Activated CD4-positive, alpha-beta T cell treated with anti-CD3 and anti-CD28 coated beads for 36 hours (primary cell): ENCODE measurements at regions of chr1 and their contacts with region 1.

Region 1: DNA sequence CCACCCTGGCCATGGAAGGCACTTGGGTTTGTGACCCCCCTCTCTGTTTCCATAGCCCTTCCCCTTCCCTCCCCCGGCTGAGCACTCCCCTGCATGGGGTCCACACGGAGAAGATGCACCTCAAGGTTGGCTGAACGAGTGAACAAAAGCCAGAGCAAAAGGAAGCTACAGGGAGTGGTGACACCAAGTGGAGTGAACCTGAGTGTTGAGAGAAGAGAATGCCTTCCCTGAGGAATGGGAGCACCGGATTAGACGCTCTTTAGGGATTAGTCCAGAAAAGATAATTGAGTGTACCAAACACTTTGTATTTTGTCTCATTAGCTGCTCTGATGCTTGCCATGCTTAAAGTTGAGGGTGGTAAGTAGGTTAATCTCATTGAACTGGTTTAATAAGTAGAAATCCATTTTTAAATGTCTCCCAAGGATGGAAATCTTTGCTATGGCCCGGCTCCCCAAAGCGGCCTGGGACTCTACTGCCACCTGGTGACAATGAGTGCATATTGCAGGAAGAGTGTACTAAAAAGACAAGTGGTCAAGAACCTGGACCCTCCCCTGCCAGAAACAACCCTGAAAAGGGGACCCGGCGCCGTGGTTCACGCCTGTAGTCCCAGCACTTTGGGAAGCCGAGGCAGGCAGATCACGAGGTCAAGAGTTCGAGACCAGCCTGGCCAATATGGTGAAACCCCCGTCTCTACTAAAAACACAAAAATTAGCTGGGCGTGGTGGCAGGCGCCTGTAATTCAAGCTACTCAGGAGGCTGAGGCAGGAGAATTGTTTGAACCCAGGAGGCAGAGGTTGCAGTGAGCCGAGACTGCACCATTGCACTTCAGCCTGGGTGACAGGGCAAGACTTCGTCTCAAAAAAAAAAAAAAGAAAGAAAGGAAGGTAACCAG is 150.6 kb upstream of the ZC3H12A start:
- DNase-seq: peak; percentile 62
- ATAC-seq: no peak
- H3K4me3 Mint-ChIP-seq: no peak overlapping the region
- H3K27ac Mint-ChIP-seq: no peak overlapping the region
- H3K4me1 Mint-ChIP-seq: no peaks in the 10 kb centered on the region
- H3K27me3 Mint-ChIP-seq: peaks cover 32% of the 10 kb centered on the region

Region 2: GRCh38 chr1:36576118-36576517 is 747.6 kb before region 1 on chr1:
- CTCF ChIA-PET with region 1: no interaction called
- POLR2A ChIA-PET with region 1: no interaction called
- intact Hi-C with region 1: loop called (anchors 2 to 10 kb)
- DNase-seq: peak; percentile 73
- ATAC-seq: peak; percentile 72
- H3K4me3 Mint-ChIP-seq: no peak overlapping the region
- H3K27ac Mint-ChIP-seq: no peak overlapping the region
- H3K4me1 Mint-ChIP-seq: no peaks in the 10 kb centered on the region
- H3K27me3 Mint-ChIP-seq: peaks cover 17% of the 10 kb centered on the region

Region 3: GRCh38 chr1:37240897-37241296 is 82.8 kb before region 1 on chr1:
- CTCF ChIA-PET with region 1: no interaction called
- POLR2A ChIA-PET with region 1: no interaction called
- intact Hi-C with region 1: no loop called
- DNase-seq: no peak
- ATAC-seq: no peak
- H3K4me3 Mint-ChIP-seq: no peak overlapping the region
- H3K27ac Mint-ChIP-seq: no peak overlapping the region
- H3K4me1 Mint-ChIP-seq: no peaks in the 10 kb centered on the region
- H3K27me3 Mint-ChIP-seq: peaks cover 6% of the 10 kb centered on the region

Region 4: GRCh38 chr1:37294529-37294928 is 29.2 kb before region 1 on chr1:
- CTCF ChIA-PET with region 1: no interaction called
- POLR2A ChIA-PET with region 1: no interaction called
- intact Hi-C with region 1: no loop called
- DNase-seq: no peak
- ATAC-seq: no peak
- H3K4me3 Mint-ChIP-seq: no peak overlapping the region
- H3K27ac Mint-ChIP-seq: no peak overlapping the region
- H3K4me1 Mint-ChIP-seq: no peaks in the 10 kb centered on the region
- H3K27me3 Mint-ChIP-seq: peaks cover 24% of the 10 kb centered on the region